PC-3 (cell line): ENCODE measurements at regions of chr1 and their contacts with region 1.

Region 1: DNA sequence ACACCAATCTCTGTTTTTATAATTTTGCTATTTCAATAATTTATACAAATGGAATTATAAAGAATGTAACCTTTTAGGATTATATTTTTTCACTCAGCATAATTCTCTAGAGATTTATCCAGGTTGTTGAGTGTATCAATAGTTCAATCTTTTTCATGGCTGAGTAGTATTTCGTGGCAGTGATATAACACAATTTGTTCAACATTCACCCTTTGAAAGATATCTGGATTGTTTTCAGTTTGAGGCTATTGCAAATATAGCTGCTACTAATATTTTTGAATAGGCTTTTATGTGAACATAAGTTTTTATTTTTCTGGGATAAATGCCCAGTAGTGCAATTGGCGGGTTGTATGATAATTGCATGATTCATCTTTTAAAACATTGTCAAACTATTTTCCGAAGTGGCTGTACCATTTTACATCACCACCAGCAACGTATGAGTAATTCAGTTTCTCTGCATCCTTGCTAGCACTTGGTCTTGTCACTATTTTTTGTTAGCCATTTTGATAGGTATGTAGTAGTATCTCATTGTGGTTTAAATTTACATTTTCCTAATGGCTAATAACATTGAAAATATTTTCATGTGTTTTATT is 55.6 kb upstream of the ABCD3 start:
- DNase-seq: peak; percentile 70
- ATAC-seq: peak; percentile 59
- H3K4me3 ChIP-seq: no peak overlapping the region
- H3K27ac ChIP-seq: no peak overlapping the region
- H3K4me1 ChIP-seq: no peaks in the 10 kb centered on the region
- H3K27me3 ChIP-seq: no peaks in the 10 kb centered on the region
- CTCF ChIP-seq: no peak

Region 2: GRCh38 chr1:93958032-93958725 is 404.4 kb before region 1 on chr1:
- CTCF ChIA-PET with region 1: no interaction called
- POLR2A ChIA-PET with region 1: interaction called, 10 read pairs
- intact Hi-C with region 1: no loop called
- DNase-seq: no peak
- ATAC-seq: no peak
- H3K4me3 ChIP-seq: no peak overlapping the region
- H3K27ac ChIP-seq: no peak overlapping the region
- H3K4me1 ChIP-seq: 0 out of 2 replicates have a peak, but pooled peaks cover 5% of the 10 kb centered on the region
- H3K27me3 ChIP-seq: no peaks in the 10 kb centered on the region
- CTCF ChIP-seq: no peak